HAP-1 (cell line): ENCODE measurements at regions of chr12 and their contacts with region 1.

Region 1: DNA sequence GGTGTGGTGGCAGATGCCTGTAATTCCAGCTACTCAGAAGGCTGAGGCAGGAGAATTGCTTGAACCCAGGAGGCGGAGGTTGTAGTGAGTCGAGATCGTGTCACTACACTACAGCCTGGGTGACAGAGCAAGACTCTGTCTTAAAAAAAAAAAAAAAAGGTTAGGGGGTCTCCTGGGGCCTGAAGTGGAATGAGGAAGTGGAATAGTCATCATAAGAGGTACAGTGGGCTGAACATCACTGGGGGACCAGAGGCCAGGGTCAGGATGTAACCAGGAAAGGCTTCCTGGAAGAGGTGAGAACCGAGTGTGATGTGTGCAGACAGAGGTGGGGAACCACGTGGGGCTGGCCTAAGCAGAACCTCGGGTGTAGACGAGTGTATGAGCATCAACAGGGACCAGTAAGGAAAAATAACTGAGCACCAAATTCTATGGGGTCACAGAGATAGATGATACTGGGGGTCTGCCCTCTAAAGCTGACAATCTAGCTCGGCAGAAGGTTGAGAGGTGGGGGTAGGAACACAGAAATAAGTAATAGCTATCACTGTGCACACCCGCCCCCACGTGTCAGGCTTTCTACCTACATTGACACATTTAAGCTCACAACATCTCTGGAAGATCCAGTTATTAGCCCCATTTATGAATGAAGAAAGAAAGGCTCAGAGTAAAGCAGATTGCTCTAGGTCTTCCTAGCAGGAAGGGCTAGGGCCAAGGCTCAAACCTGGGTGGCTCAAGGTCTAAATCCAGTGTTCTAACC is 5.0 kb upstream of the COX6A1 start:
- DNase-seq: no peak
- H3K4me3 ChIP-seq: no peak overlapping the region
- H3K4me1 ChIP-seq: peaks cover 3% of the 10 kb centered on the region; the same call in 1 of the 2 replicates
- H3K27me3 ChIP-seq: no peaks in the 10 kb centered on the region

Region 2: DNA sequence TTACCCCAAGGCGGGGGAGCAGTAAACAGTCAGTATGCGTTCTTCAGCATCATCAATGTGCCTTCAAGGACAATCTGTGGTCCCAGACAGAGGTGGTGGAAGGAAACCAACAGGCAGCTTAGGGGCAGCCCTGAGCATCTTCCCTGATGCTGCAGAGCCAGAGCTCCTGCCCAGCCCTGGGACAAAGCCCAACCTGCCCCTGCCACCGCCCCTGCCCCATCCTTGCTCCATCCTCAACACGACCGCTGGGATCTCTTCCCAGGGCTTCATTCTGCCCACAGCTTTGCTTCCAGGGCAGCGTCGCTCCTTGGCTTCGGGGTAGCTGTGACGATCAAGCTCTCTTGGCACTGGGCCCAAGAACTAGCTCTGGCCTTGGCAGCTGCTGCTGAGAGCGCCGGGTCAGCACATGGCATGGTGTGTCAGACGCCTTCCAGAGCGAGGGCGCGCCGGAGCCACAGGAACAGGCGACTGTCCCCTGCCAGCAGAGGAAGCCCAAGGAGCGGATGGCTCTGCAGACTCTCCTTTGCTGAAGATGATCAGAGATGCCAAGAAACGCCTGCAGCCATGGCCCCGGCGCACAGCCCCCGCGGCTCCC is 332.4 kb before region 1 on chr12:
- in situ Hi-C with region 1: no loop called
- DNase-seq: no peak
- H3K4me3 ChIP-seq: no peak overlapping the region
- H3K4me1 ChIP-seq: no peaks in the 10 kb centered on the region
- H3K27me3 ChIP-seq: no peaks in the 10 kb centered on the region

Region 3: DNA sequence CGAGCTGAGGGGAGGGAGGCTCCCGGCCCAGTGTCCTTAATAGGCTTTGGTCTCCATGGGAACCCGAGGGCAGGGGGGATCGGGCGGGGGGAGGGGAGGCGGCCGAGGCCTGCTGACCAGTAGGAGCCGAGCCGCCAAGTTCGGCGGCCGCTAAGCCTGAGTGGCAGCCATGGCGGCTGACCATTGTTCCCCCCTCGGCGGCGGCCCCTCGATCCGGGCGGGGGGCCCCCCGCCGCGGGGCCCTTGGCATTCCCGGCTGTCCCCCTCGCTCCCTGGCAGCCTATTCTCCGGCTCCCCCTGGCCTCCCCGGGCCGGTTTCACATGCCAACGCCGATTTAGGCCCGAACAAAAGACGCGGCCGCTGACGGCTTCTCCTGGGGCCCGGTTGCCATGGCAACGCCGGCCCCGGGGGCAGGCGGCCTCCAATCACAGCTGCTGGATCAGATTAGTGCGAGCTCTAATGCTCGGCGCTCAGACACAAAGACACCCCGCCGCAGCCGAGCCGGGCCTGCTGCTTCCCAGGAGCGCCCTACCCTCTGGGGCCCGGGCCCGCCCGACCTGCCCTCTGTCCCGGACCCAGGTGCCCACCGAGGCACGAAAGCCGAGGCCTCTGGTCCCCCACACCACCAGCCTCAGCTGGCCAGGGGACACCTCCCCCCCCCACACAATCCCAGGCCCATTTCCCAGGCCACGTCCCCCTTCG is 71.3 kb before region 1 on chr12:
- in situ Hi-C with region 1: loop called (anchors 5 kb)
- DNase-seq: peak; percentile 96
- H3K4me3 ChIP-seq: peak overlapping the region; percentile 25
- H3K4me1 ChIP-seq: peaks cover 24% of the 10 kb centered on the region
- H3K27me3 ChIP-seq: no peaks in the 10 kb centered on the region